Right ventricle myocardium superior (tissue), 1 donor: ENCODE measurements at regions of chr4 and their contacts with region 1.

Region 1: GRCh38 chr4:144174401-144175067 is 34.0 kb upstream of the GYPA start:
- DNase-seq: no peak
- ATAC-seq: peak; percentile 46

Region 2: DNA sequence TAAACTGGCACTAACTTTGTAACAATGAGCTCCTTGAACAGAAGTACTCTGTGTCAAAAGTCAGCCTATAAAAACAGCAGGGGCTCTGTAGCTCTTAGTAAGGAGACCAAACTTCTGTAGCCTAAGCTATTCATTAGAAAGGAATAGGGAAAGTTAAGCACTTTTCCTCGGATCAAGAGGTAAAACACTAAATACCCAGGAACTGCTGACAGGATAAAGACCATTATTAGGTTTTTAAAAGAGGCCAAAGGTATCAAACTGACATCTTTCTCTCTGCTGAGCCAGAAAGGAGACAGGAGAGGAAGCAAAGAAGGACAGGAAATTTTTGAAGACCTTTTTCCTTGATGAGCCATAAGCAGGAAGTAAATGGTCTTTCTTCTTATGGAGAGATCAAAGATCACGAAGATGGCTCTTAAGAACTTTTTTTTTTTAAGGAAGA is 891.5 kb after region 1 on chr4:
- intact Hi-C with region 1: loop called (anchors 5 kb)
- DNase-seq: no peak
- ATAC-seq: no peak